GM12878 (cell line): ENCODE measurements at regions of chr2 and their contacts with region 1.

Region 1: GRCh38 chr2:135960656-135961551 is 24.5 kb downstream of the DARS1 start:
- DNase-seq: no peak
- ATAC-seq: peak; percentile 45; the same call in 2 of the 3 replicates
- H3K4me3 ChIP-seq: no peak overlapping the region
- H3K27ac ChIP-seq: no peak overlapping the region
- H3K4me1 ChIP-seq: peaks cover 15% of the 10 kb centered on the region
- H3K27me3 ChIP-seq: no peaks in the 10 kb centered on the region
- CTCF ChIP-seq: no peak
- EP300 ChIP-seq: no peak
- POLR2A ChIP-seq: no peak
- RAD21 ChIP-seq: no peak

Region 2: GRCh38 chr2:135948642-135949355 is 12.1 kb before region 1 on chr2:
- CTCF ChIA-PET with region 1: interaction called, 5 read pairs
- POLR2A ChIA-PET with region 1: interaction called, 4 read pairs
- RAD21 ChIA-PET with region 1: interaction called, 12 read pairs
- SMC1A ChIA-PET with region 1: interaction called, 14 read pairs
- in situ Hi-C with region 1: no loop called
- intact Hi-C with region 1: no loop called
- DNase-seq: no peak
- ATAC-seq: peak; percentile 81
- H3K4me3 ChIP-seq: no peak overlapping the region
- H3K27ac ChIP-seq: no peak overlapping the region
- H3K4me1 ChIP-seq: peaks cover 3% of the 10 kb centered on the region
- H3K27me3 ChIP-seq: no peaks in the 10 kb centered on the region
- CTCF ChIP-seq: no peak
- EP300 ChIP-seq: peak in 1 of 2 experiments; percentile 78; a peak in 1 of 4 replicates
- POLR2A ChIP-seq: no peak
- RAD21 ChIP-seq: no peak

Region 3: GRCh38 chr2:135975702-135976101 is 14.8 kb after region 1 on chr2:
- CTCF ChIA-PET with region 1: interaction called, 7 read pairs
- POLR2A ChIA-PET with region 1: interaction called, 11 read pairs
- RAD21 ChIA-PET with region 1: interaction called, 9 read pairs
- SMC1A ChIA-PET with region 1: interaction called, 25 read pairs
- in situ Hi-C with region 1: no loop called
- intact Hi-C with region 1: no loop called
- DNase-seq: no peak
- ATAC-seq: peak; percentile 32
- H3K4me3 ChIP-seq: no peak overlapping the region
- H3K27ac ChIP-seq: no peak overlapping the region
- H3K4me1 ChIP-seq: peaks cover 6% of the 10 kb centered on the region
- H3K27me3 ChIP-seq: no peaks in the 10 kb centered on the region
- CTCF ChIP-seq: no peak
- EP300 ChIP-seq: no peak
- POLR2A ChIP-seq: no peak
- RAD21 ChIP-seq: no peak